Ascending aorta (tissue), 2 donors: ENCODE measurements at regions of chr16 and their contacts with region 1.

Region 1: DNA sequence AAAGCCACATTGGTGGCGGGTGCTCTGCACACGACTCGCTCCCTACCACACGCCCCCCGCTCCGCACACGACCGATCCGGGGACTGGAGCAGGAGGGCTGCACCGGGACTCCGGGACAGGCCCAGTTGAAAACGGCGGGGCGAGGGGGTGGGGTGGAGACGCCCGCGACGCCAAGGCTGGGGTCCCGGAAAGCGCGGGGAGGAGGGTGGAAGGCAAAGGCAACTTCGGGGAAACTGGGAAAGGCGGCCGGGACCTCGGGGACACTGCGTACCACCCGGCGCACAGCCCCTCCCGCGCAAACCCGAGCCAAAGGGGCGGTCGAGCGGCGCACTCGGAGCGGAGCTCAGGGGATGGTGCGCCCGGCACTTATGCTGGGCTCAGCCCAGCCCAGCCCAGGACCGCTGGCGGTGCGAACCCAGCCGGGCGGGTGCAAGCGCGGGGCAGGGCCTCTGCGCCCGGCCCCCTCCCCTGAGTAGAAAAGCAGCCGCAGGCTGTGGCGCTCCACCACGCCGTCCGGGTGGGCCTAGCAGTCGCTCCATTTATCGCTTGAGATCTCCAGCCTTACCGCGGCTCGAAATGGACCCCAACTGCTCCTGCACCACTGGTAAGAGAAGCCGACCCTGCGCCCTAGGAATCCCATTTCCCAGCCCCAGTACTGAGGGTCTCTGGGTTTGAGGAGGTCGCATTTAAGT is at the start of gene MT1M:
- DNase-seq: peak in 1 of 2 donors; percentile 88
- H3K4me3 ChIP-seq: peak within 1 kb of the TSS; percentile 54 to 88
- H3K27ac ChIP-seq: peak within 1 kb of the TSS; percentile 88 to 96
- H3K4me1 ChIP-seq: peaks cover 3 to 12% of the 10 kb centered on the region in 2 donors
- H3K27me3 ChIP-seq: no peaks in the 10 kb centered on the region
- CTCF ChIP-seq: no peak
- total RNA-seq, gene MT1M: 105 TPM

Region 2: GRCh38 chr16:56681939-56682702 is 49.8 kb after region 1 on chr16 and contains the start of gene MT1X:
- intact Hi-C with region 1: loop called (anchors 2 kb)
- DNase-seq: peak; percentile 81 to 97
- H3K4me3 ChIP-seq: peak within 1 kb of the TSS; percentile 71 to 85
- H3K27ac ChIP-seq: peak within 1 kb of the TSS; percentile 83 to 88
- H3K4me1 ChIP-seq: peaks cover 0 to 26% of the 10 kb centered on the region in 2 donors
- H3K27me3 ChIP-seq: no peaks in the 10 kb centered on the region
- CTCF ChIP-seq: no peak
- total RNA-seq, gene MT1X: 2,291 TPM